ENCODE measurements at regions of chr5 and their contacts with region 1.

Region 1: GRCh38 chr5:66945389-66946349 is 250.9 kb downstream of the CD180 start:
- DNase-seq: no peak
- H3K4me3 ChIP-seq: no peak overlapping the region
- H3K27ac ChIP-seq: no peak overlapping the region
- H3K4me1 ChIP-seq: no peaks in the 10 kb centered on the region
- H3K27me3 ChIP-seq: no peaks in the 10 kb centered on the region
- CTCF ChIP-seq: no peak

Region 2: DNA sequence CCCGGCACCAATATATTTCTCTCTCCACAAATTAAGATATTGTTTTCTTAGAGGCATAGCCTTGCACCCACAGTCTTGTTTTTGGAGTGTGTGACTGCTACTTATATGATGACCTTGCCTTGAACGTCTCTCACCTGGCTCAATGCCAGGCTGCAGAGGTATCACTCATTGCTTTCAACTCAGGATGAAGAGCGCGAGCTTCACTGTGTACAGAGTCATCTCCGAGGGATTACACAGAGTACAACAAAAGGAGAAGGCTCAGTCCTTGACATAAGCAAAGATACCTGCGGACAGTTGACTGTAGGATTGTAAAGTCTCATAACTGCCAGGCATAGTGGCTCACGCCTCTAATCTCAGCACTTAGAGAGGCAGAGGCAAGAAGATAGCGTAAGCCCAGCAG is 197.1 kb after region 1 on chr5:
- CTCF ChIA-PET with region 1: no interaction called
- POLR2A ChIA-PET with region 1: no interaction called
- intact Hi-C with region 1: no loop called
- DNase-seq: no peak
- H3K4me3 ChIP-seq: no peak overlapping the region
- H3K27ac ChIP-seq: no peak overlapping the region
- H3K4me1 ChIP-seq: peaks cover 3% of the 10 kb centered on the region
- H3K27me3 ChIP-seq: no peaks in the 10 kb centered on the region
- CTCF ChIP-seq: no peak

Region 3: GRCh38 chr5:67170767-67171166 is 225.1 kb after region 1 on chr5:
- CTCF ChIA-PET with region 1: no interaction called
- POLR2A ChIA-PET with region 1: interaction called, 13 read pairs
- intact Hi-C with region 1: no loop called
- DNase-seq: no peak
- H3K4me3 ChIP-seq: no peak overlapping the region
- H3K27ac ChIP-seq: no peak overlapping the region
- H3K4me1 ChIP-seq: no peaks in the 10 kb centered on the region
- H3K27me3 ChIP-seq: no peaks in the 10 kb centered on the region
- CTCF ChIP-seq: no peak

Measured in A673 (cell line).